Posterior vena cava (tissue), 2 donors: ENCODE measurements at regions of chr1 and their contacts with region 1.

Region 1: GRCh38 chr1:116345843-116346242 is 27.2 kb upstream of the ATP1A1 start:
- DNase-seq: no peak

Region 2: GRCh38 chr1:116218990-116219321 is 126.9 kb before region 1 on chr1:
- intact Hi-C with region 1: loop called in 1 of 2 experiments (anchors 10 kb)
- DNase-seq: no peak

Region 3: DNA sequence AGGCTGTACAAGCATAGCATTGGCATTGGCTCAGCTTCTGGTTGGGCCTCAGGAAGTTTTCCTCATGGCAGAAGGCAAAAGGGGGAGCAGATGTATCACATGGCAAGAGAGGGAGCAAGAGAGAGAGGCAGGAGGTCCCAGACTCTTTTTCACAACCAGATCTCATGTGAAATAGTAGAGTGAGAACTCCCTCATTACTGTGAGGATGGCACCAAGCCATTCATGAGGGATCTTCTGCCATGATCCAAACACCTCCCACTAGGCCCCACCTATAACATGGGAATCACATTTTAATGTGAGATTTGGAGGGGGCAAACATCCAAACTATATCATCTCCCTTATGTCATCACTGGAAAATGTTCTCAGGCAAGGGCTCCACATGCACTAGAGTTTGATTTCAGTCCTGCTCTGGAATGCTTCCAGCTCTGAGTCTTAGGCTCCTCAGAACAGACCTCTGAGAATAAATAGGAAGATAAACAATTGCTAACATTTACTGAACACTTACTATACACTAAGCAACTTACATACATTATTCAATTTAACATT is 904.3 kb after region 1 on chr1:
- intact Hi-C with region 1: no loop called
- DNase-seq: no peak